Activated CD8-positive, alpha-beta memory T cell treated with anti-CD3 and anti-CD28 coated beads, Interleukin-2, amount 10 ng/mL, durations not matched to agents 7 days and 5 days (primary cell): ENCODE measurements at regions of chr17 and their contacts with region 1.

Region 1: DNA sequence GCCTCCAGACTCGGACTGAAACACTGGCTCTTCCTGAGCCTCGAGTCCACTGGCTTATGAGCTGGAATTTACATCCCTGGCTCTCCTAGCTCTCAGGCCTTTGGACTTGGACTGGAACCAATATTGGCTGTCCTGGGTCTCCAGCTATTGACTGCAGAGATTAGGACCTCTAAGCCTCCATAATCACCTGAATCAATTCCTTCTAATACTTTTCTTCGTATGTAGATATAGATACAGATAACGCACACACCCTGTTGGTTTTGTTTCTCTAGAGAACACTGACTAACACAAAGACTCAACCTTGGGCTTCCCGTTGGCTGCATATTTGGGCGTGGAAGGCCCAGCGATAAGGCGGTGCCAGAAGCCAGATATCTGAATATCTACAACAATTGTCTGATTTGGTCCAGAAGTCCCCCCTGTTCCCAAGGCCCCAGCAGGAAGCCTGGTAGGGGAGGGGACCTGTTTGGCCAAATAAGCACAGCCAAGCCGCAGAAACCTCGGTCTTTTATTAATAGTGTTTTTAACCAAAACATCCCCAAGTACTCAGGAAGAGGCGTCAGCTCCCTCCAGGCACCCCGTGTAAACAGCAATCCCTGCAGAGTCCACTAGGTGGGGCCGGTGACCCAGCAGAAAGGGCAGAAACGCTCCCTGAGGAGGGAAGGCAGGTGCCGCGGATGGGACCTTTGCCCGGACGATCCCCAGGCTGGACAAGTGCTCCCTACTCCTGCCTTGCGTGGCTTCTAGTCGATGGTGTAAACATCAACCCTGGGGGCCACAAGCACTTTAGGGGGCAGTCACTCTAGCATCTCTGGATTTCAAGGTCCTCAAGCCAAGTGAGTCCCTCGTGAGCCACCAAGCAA is 57.0 kb downstream of the ABR start:
- DNase-seq: peak; percentile 89
- ATAC-seq: peak; percentile 71
- H3K4me3 Mint-ChIP-seq: no peak overlapping the region
- H3K27ac Mint-ChIP-seq: peak overlapping the region; percentile 57
- H3K4me1 Mint-ChIP-seq: peaks cover 38% of the 10 kb centered on the region
- H3K27me3 Mint-ChIP-seq: no peaks in the 10 kb centered on the region

Region 2: GRCh38 chr17:1055751-1056645 is 66.8 kb before region 1 on chr17:
- CTCF ChIA-PET with region 1: interaction called, 24 read pairs
- DNase-seq: peak; percentile 64
- ATAC-seq: peak; percentile 65
- H3K4me3 Mint-ChIP-seq: no peak overlapping the region
- H3K27ac Mint-ChIP-seq: no peak overlapping the region
- H3K4me1 Mint-ChIP-seq: peaks cover 4% of the 10 kb centered on the region
- H3K27me3 Mint-ChIP-seq: no peaks in the 10 kb centered on the region

Region 3: GRCh38 chr17:1158879-1159278 is 36.1 kb after region 1 on chr17:
- CTCF ChIA-PET with region 1: no interaction called
- DNase-seq: no peak
- ATAC-seq: no peak
- H3K4me3 Mint-ChIP-seq: no peak overlapping the region
- H3K27ac Mint-ChIP-seq: no peak overlapping the region
- H3K4me1 Mint-ChIP-seq: no peaks in the 10 kb centered on the region
- H3K27me3 Mint-ChIP-seq: no peaks in the 10 kb centered on the region

Region 4: GRCh38 chr17:1186923-1187771 is 64.4 kb after region 1 on chr17:
- CTCF ChIA-PET with region 1: interaction called, 97 read pairs
- DNase-seq: peak; percentile 80
- ATAC-seq: peak; percentile 95
- H3K4me3 Mint-ChIP-seq: no peak overlapping the region
- H3K27ac Mint-ChIP-seq: no peak overlapping the region
- H3K4me1 Mint-ChIP-seq: peaks cover 18% of the 10 kb centered on the region
- H3K27me3 Mint-ChIP-seq: peaks cover 17% of the 10 kb centered on the region

Region 5: GRCh38 chr17:1229432-1229899 is 106.7 kb after region 1 on chr17:
- CTCF ChIA-PET with region 1: interaction called, 21 read pairs
- DNase-seq: peak; percentile 57
- ATAC-seq: peak; percentile 79
- H3K4me3 Mint-ChIP-seq: peak overlapping the region; percentile 81
- H3K27ac Mint-ChIP-seq: no peak overlapping the region
- H3K4me1 Mint-ChIP-seq: peaks cover 19% of the 10 kb centered on the region
- H3K27me3 Mint-ChIP-seq: peaks cover 52% of the 10 kb centered on the region

Region 6: DNA sequence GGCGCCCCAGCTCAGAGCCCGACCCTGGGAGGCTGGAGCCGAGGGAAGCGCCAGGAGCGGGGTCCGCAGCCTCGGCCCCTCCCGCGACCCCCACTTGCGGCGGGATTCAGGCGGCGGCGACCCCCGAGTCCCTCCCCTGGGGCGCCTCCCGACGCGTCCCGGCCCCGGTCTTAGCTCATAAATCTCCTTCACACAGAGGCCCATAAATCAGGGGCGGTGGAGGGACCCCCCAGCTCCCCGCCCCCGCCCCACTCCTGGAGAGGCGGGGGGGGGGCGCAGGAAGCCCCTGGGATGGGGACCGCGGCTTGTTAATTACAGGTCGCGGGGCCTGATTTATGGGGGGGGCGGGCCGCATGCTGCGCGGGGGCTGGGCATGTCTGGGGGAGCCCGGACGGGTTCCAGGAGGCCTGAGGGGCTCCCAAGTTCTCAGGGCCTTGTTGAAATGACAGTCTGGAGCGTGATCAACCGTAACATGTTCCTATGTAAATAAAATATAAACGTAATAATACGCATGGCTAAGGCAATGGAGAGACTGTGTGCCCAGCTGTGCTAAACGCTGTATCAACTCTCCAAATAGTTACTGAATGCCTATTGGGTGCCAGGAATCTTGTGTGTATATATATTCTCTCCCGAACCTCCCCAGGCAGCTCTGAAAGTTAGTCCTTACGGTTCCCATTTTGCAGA is 137.5 kb after region 1 on chr17:
- CTCF ChIA-PET with region 1: interaction called, 29 read pairs
- DNase-seq: no peak
- ATAC-seq: no peak
- H3K4me3 Mint-ChIP-seq: no peak overlapping the region
- H3K27ac Mint-ChIP-seq: no peak overlapping the region
- H3K4me1 Mint-ChIP-seq: peaks cover 42% of the 10 kb centered on the region
- H3K27me3 Mint-ChIP-seq: peaks cover 26% of the 10 kb centered on the region